T-cell (primary cell): ENCODE measurements at regions of chr2 and their contacts with region 1.

Region 1: DNA sequence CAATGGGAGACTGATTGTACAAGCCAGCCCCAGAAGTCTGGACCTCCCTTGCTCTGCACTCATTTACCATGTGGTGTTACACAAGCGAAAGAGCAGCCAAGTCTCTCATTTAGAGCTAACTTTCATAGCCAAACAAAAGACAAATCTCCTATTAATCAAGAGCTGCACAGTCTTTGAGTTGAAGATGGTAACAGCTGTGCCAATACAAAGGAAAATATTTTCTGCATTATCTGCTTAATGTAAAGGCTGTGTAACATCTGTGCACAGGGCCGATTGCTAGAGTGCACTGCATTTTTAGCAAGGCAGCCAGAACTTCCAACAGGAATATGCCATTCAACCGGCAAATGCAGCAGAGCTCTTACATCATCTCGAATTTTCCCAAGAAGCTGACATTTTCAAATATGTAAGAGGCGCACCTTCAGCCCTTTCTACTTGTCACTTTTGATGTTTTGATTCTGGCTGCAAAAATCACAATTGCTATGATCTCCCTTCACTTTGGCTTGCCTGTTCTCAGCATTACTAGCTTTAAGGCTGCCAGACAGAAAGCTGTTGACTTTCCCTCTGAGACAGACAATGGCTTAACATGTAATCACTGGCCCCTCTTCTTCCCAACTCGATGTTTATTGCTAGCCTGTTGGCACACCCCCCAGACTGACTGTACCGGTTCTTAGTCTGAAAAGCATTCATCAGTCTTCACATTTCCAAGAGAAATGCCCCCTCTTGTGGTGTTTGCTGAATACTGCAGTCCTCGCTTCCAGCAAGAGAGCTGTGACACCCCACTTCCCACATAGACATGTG is 96.9 kb upstream of the TANK start:
- DNase-seq: peak; percentile 8 to 79 (median 47)
- ATAC-seq: peak; percentile 85 to 89 (median 88)
- H3K4me3 ChIP-seq: no peak overlapping the region
- H3K4me3 Mint-ChIP-seq: no peak overlapping the region
- H3K27ac ChIP-seq: no peak overlapping the region
- H3K27ac Mint-ChIP-seq: no peak overlapping the region
- H3K4me1 ChIP-seq: no peaks in the 10 kb centered on the region
- H3K4me1 Mint-ChIP-seq: peaks cover 4 to 6% (median 4%) of the 10 kb centered on the region in 3 donors
- H3K27me3 ChIP-seq: no peaks in the 10 kb centered on the region
- H3K27me3 Mint-ChIP-seq: no peaks in the 10 kb centered on the region

Region 2: GRCh38 chr2:160109936-160110673 is 953.3 kb before region 1 on chr2:
- CTCF ChIA-PET with region 1: interaction called, 10 to 13 read pairs
- POLR2A ChIA-PET with region 1: interaction called in 1 of 2 experiments, 3 read pairs
- DNase-seq: peak in 33 of 35 experiments; percentile 8 to 78 (median 37)
- ATAC-seq: peak in 3 of 4 experiments; percentile 50 to 71 (median 52)
- H3K4me3 ChIP-seq: no peak overlapping the region
- H3K4me3 Mint-ChIP-seq: no peak overlapping the region
- H3K27ac ChIP-seq: no peak overlapping the region
- H3K27ac Mint-ChIP-seq: no peak overlapping the region
- H3K4me1 ChIP-seq: no peaks in the 10 kb centered on the region
- H3K4me1 Mint-ChIP-seq: no peaks in the 10 kb centered on the region
- H3K27me3 ChIP-seq: no peaks in the 10 kb centered on the region
- H3K27me3 Mint-ChIP-seq: peaks cover 5 to 19% of the 10 kb centered on the region in 2 donors

Region 3: GRCh38 chr2:160317181-160318099 is 745.9 kb before region 1 on chr2:
- CTCF ChIA-PET with region 1: interaction called in 1 of 2 experiments, 11 read pairs
- POLR2A ChIA-PET with region 1: no interaction called
- DNase-seq: no peak
- ATAC-seq: no peak
- H3K4me3 ChIP-seq: no peak overlapping the region
- H3K4me3 Mint-ChIP-seq: no peak overlapping the region
- H3K27ac ChIP-seq: no peak overlapping the region
- H3K27ac Mint-ChIP-seq: peak overlapping the region in 1 of 2 donors; percentile 26
- H3K4me1 ChIP-seq: peaks cover 5 to 7% of the 10 kb centered on the region in 2 experiments
- H3K4me1 Mint-ChIP-seq: peaks cover 65 to 73% (median 69%) of the 10 kb centered on the region in 3 donors
- H3K27me3 ChIP-seq: no peaks in the 10 kb centered on the region
- H3K27me3 Mint-ChIP-seq: no peaks in the 10 kb centered on the region

Region 4: GRCh38 chr2:160324161-160324800 is 739.1 kb before region 1 on chr2:
- CTCF ChIA-PET with region 1: interaction called in 1 of 2 experiments, 15 read pairs
- POLR2A ChIA-PET with region 1: no interaction called
- DNase-seq: peak in 30 of 35 experiments; percentile 4 to 61 (median 32)
- ATAC-seq: no peak
- H3K4me3 ChIP-seq: no peak overlapping the region
- H3K4me3 Mint-ChIP-seq: no peak overlapping the region
- H3K27ac ChIP-seq: no peak overlapping the region
- H3K27ac Mint-ChIP-seq: no peak overlapping the region
- H3K4me1 ChIP-seq: peaks cover 28 to 47% of the 10 kb centered on the region in 2 experiments
- H3K4me1 Mint-ChIP-seq: peaks cover 93 to 96% (median 94%) of the 10 kb centered on the region in 3 donors
- H3K27me3 ChIP-seq: no peaks in the 10 kb centered on the region
- H3K27me3 Mint-ChIP-seq: no peaks in the 10 kb centered on the region

Region 5: DNA sequence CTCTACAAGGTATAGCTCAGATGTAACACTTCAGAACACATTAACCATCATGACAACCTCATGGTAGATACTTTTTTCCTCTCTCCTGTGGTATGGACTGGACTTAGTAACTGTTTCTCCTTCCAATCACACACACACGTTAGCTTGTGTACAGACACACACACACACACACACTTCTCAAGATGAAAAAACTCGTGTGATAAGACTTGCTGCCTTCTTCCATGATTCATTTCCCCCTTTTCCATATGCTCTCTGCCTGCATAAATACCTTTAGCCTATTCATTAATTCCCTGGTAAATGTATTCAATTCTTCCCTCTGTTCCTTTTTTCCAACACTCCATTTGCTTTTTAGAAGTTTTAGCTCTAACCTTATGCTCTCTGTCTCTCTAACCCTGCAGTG is 22.0 kb before region 1 on chr2:
- CTCF ChIA-PET with region 1: interaction called, 6 to 11 read pairs
- POLR2A ChIA-PET with region 1: no interaction called
- DNase-seq: no peak
- ATAC-seq: no peak
- H3K4me3 ChIP-seq: no peak overlapping the region
- H3K4me3 Mint-ChIP-seq: no peak overlapping the region
- H3K27ac ChIP-seq: no peak overlapping the region
- H3K27ac Mint-ChIP-seq: no peak overlapping the region
- H3K4me1 ChIP-seq: no peaks in the 10 kb centered on the region
- H3K4me1 Mint-ChIP-seq: no peaks in the 10 kb centered on the region
- H3K27me3 ChIP-seq: no peaks in the 10 kb centered on the region
- H3K27me3 Mint-ChIP-seq: peaks cover 4 to 10% of the 10 kb centered on the region in 2 donors

Region 6: GRCh38 chr2:161077367-161078210 is 14.2 kb after region 1 on chr2:
- CTCF ChIA-PET with region 1: interaction called, 15 to 22 read pairs
- POLR2A ChIA-PET with region 1: no interaction called
- DNase-seq: peak in 34 of 35 experiments; percentile 18 to 80 (median 55)
- ATAC-seq: peak; percentile 87 to 94 (median 93)
- H3K4me3 ChIP-seq: no peak overlapping the region
- H3K4me3 Mint-ChIP-seq: peak overlapping the region; percentile 21 to 55 (median 29)
- H3K27ac ChIP-seq: peak overlapping the region; percentile 50
- H3K27ac Mint-ChIP-seq: peak overlapping the region; percentile 77 to 78
- H3K4me1 ChIP-seq: peaks cover 15 to 27% of the 10 kb centered on the region in 2 experiments
- H3K4me1 Mint-ChIP-seq: peaks cover 29 to 36% (median 29%) of the 10 kb centered on the region in 3 donors
- H3K27me3 ChIP-seq: no peaks in the 10 kb centered on the region
- H3K27me3 Mint-ChIP-seq: no peaks in the 10 kb centered on the region

Region 7: DNA sequence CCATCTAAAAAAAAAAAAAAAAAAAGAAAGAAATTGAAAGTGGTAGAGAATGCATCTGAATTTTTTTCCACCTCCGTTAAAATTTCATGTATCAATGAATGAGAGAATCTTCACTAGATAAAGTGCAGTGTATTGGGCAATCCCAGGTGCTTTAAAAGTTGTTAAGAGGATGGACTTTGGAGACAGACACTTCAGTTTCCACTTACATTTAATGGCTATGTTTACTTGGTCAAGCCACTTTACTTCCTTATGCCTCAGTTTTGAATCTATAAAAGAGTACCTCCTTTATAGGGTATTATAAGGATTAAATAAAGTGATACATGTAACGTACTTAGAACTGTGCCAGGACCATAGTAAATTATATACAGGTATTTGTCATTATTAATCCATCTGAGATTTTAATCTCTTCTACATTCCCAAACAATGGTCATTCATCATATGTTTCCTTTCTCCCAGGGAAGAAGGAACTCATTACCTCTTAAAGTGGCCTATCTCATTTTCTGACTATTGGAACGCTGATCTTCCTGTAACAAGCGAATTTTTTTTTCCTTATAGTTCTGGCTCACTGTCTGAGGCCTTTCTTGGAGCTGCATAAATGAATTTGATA is 67.8 kb after region 1 on chr2:
- CTCF ChIA-PET with region 1: no interaction called
- POLR2A ChIA-PET with region 1: no interaction called
- DNase-seq: no peak
- ATAC-seq: no peak
- H3K4me3 ChIP-seq: no peak overlapping the region
- H3K4me3 Mint-ChIP-seq: no peak overlapping the region
- H3K27ac ChIP-seq: no peak overlapping the region
- H3K27ac Mint-ChIP-seq: no peak overlapping the region
- H3K4me1 ChIP-seq: peaks cover 3 to 12% of the 10 kb centered on the region in 2 experiments
- H3K4me1 Mint-ChIP-seq: peaks cover 12 to 27% (median 24%) of the 10 kb centered on the region in 3 donors
- H3K27me3 ChIP-seq: no peaks in the 10 kb centered on the region
- H3K27me3 Mint-ChIP-seq: no peaks in the 10 kb centered on the region

Region 8: GRCh38 chr2:161604901-161605300 is 541.5 kb after region 1 on chr2:
- CTCF ChIA-PET with region 1: no interaction called
- POLR2A ChIA-PET with region 1: no interaction called
- DNase-seq: no peak
- ATAC-seq: no peak
- H3K4me3 ChIP-seq: no peak overlapping the region
- H3K4me3 Mint-ChIP-seq: no peak overlapping the region
- H3K27ac ChIP-seq: no peak overlapping the region
- H3K27ac Mint-ChIP-seq: no peak overlapping the region
- H3K4me1 ChIP-seq: no peaks in the 10 kb centered on the region
- H3K4me1 Mint-ChIP-seq: no peaks in the 10 kb centered on the region
- H3K27me3 ChIP-seq: no peaks in the 10 kb centered on the region
- H3K27me3 Mint-ChIP-seq: peaks cover 12 to 21% of the 10 kb centered on the region in 2 donors

Region 9: DNA sequence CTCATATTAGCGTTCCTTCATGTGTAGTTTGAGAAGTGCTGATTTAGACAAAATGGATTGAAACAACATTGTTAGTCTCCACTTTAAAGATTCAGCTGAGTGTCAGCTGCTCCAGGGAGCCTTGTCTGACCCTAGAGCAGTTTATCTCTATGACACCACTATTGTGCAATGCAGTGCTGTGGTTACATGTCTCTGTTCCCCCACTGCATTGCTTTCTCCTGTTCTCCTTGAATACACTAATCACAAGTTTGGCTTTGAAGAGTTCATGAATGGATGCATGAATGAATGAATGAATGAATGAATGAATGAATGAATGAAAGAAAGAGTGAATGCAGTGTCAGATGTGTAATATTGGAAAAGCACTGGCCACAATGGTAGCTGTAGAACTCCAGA is 1050.4 kb after region 1 on chr2:
- CTCF ChIA-PET with region 1: interaction called in 1 of 2 experiments, 10 read pairs
- POLR2A ChIA-PET with region 1: no interaction called
- DNase-seq: no peak
- ATAC-seq: no peak
- H3K4me3 ChIP-seq: no peak overlapping the region
- H3K4me3 Mint-ChIP-seq: no peak overlapping the region
- H3K27ac ChIP-seq: no peak overlapping the region
- H3K27ac Mint-ChIP-seq: no peak overlapping the region
- H3K4me1 ChIP-seq: no peaks in the 10 kb centered on the region
- H3K4me1 Mint-ChIP-seq: peaks cover 7 to 8% (median 8%) of the 10 kb centered on the region in 3 donors
- H3K27me3 ChIP-seq: no peaks in the 10 kb centered on the region
- H3K27me3 Mint-ChIP-seq: no peaks in the 10 kb centered on the region